AG04450 (cell line): ENCODE measurements at regions of chr5 and their contacts with region 1.

Region 1: GRCh38 chr5:175464074-175464941 is 14.1 kb upstream of the SFXN1 start:
- DNase-seq: no peak
- H3K4me3 ChIP-seq: no peak overlapping the region
- H3K27ac ChIP-seq: no peak overlapping the region
- H3K27me3 ChIP-seq: peaks cover 19% of the 10 kb centered on the region
- CTCF ChIP-seq: peak; percentile 84

Region 2: GRCh38 chr5:175444060-175444904 is 20.0 kb before region 1 on chr5 and contains the start of gene DRD1:
- CTCF ChIA-PET with region 1: interaction called, 14 read pairs
- POLR2A ChIA-PET with region 1: no interaction called
- DNase-seq: no peak
- H3K4me3 ChIP-seq: peak within 1 kb of the TSS; percentile 49
- H3K27ac ChIP-seq: no peak within 1 kb of the TSS
- H3K27me3 ChIP-seq: peaks cover 10% of the 10 kb centered on the region
- CTCF ChIP-seq: peak; percentile 61
- polyA plus RNA-seq, gene DRD1: 0.11 TPM in 2 replicates

Region 3: GRCh38 chr5:175478384-175479124 is 14.2 kb after region 1 on chr5 and contains the start of gene SFXN1:
- CTCF ChIA-PET with region 1: interaction called, 50 read pairs
- POLR2A ChIA-PET with region 1: interaction called, 7 read pairs
- DNase-seq: no peak
- H3K4me3 ChIP-seq: peak within 1 kb of the TSS; percentile 90
- H3K27ac ChIP-seq: peak within 1 kb of the TSS; percentile 21
- H3K27me3 ChIP-seq: peaks cover 7% of the 10 kb centered on the region
- CTCF ChIP-seq: no peak
- polyA plus RNA-seq, gene SFXN1: 125 and 126 TPM in 2 replicates